Activated CD4-positive, alpha-beta T cell treated with anti-CD3 and anti-CD28 coated beads, Interleukin-2, amount 10 ng/mL, durations not matched to agents 7 days and 5 days (primary cell): ENCODE measurements at regions of chr17 and their contacts with region 1.

Region 1: DNA sequence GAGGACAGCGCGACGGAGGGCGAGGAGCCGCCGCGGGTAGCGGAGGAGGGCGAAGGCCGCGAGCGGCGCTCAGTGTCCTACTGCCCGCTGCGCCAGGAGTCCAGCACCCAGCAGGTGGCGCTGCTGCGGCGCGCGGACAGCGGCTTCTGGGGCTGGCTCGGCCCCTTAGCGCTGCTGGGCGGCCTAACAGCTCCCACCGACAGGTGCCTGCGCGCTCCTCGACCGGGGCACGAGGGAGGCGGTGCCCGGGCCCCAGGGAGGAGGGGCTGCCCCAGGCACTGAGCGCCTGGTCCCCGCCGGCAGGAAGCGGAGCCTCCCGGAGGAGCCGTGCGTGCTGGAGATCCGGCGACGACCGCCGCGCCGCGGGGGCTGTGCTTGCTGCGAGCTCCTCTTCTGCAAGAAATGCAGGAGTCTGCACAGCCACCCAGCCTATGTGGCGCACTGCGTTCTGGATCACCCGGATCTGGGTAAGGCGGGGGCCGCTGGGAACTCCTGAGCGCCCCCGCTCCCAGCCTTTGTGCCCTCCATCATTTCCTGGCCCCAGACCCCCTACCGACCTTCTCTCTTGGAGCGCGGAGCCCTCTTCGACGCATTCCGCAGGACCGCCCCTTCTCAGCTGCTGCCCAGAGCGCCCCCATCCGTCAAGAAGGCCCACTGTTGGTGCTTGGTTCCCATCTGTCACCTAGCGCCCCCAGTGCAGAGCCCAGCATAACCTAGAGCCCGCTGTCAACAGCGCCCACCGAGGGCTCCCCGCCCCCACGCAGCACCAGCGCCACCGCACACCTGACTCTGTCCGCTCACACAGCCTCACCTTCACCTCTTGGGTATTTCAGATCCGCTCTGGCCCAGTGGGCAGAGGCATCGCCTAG is 3.7 kb downstream of the C17orf50 start:
- DNase-seq: peak; percentile 82
- H3K4me3 Mint-ChIP-seq: peak overlapping the region; percentile 78
- H3K27ac Mint-ChIP-seq: peak overlapping the region; percentile 74
- H3K4me1 Mint-ChIP-seq: peaks cover 11% of the 10 kb centered on the region
- H3K27me3 Mint-ChIP-seq: no peaks in the 10 kb centered on the region

Region 2: DNA sequence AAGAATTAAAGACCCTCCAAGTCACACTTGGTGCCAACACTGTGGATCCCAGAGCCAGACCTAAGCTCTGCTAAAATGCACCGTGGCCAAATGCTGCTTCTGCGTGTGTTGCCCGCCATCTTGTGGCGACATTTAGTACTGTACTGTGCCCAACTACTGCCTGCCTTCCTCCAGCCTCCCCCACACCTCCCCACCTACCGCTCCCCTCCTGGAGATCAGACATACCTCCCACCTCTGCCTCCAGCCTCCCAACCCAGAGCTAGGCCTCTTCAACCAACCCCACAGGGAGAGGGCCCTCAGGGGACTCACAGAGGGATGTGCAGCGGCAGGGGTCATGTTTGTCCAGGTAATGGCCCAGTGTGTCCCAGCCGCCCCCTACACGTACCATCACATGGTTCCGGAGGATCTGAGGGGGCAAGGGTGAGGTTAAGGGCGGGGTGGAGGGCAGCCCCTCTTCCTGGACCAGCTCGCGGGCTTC is 16.8 kb before region 1 on chr17:
- CTCF ChIA-PET with region 1: interaction called, 13 read pairs
- POLR2A ChIA-PET with region 1: no interaction called
- DNase-seq: peak; percentile 84
- H3K4me3 Mint-ChIP-seq: no peak overlapping the region
- H3K27ac Mint-ChIP-seq: no peak overlapping the region
- H3K4me1 Mint-ChIP-seq: peaks cover 14% of the 10 kb centered on the region
- H3K27me3 Mint-ChIP-seq: peaks cover 36% of the 10 kb centered on the region

Region 3: GRCh38 chr17:35774499-35774898 is 10.1 kb after region 1 on chr17:
- CTCF ChIA-PET with region 1: interaction called, 16 read pairs
- POLR2A ChIA-PET with region 1: no interaction called
- DNase-seq: no peak
- H3K4me3 Mint-ChIP-seq: no peak overlapping the region
- H3K27ac Mint-ChIP-seq: no peak overlapping the region
- H3K4me1 Mint-ChIP-seq: no peaks in the 10 kb centered on the region
- H3K27me3 Mint-ChIP-seq: peaks cover 15% of the 10 kb centered on the region

Region 4: DNA sequence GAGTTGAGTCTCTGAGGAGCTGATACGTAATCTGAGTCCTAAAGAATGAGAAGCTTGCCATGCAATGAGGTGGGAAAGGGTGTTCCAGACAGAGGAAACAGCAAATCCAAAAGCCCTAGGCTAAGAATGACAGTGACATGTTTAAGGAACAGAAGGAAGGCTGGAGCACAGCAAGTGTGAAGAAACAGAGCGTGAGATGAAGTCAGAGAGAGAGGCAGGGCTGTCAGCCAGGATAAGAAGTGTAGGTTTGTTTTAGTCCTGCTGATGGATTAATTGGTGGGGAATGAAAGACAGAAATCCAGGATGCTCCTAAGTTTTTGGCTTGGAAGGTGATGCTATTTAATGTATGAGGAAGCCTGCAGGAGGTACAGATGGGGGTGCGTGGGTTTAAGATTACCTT is 16.6 kb after region 1 on chr17:
- CTCF ChIA-PET with region 1: interaction called, 19 read pairs
- POLR2A ChIA-PET with region 1: no interaction called
- DNase-seq: no peak
- H3K4me3 Mint-ChIP-seq: no peak overlapping the region
- H3K27ac Mint-ChIP-seq: no peak overlapping the region
- H3K4me1 Mint-ChIP-seq: no peaks in the 10 kb centered on the region
- H3K27me3 Mint-ChIP-seq: peaks cover 20% of the 10 kb centered on the region

Region 5: GRCh38 chr17:35788504-35789368 is 24.4 kb after region 1 on chr17:
- CTCF ChIA-PET with region 1: interaction called, 13 read pairs
- POLR2A ChIA-PET with region 1: no interaction called
- DNase-seq: no peak
- H3K4me3 Mint-ChIP-seq: no peak overlapping the region
- H3K27ac Mint-ChIP-seq: no peak overlapping the region
- H3K4me1 Mint-ChIP-seq: peaks cover 9% of the 10 kb centered on the region
- H3K27me3 Mint-ChIP-seq: peaks cover 33% of the 10 kb centered on the region

Region 6: GRCh38 chr17:35794988-35795824 is 30.8 kb after region 1 on chr17 and contains the start of gene MMP28:
- CTCF ChIA-PET with region 1: interaction called, 20 read pairs
- POLR2A ChIA-PET with region 1: no interaction called
- DNase-seq: peak; percentile 29
- H3K4me3 Mint-ChIP-seq: peak within 1 kb of the TSS; percentile 69
- H3K27ac Mint-ChIP-seq: no peak within 1 kb of the TSS
- H3K4me1 Mint-ChIP-seq: peaks cover 12% of the 10 kb centered on the region
- H3K27me3 Mint-ChIP-seq: peaks cover 57% of the 10 kb centered on the region
- total RNA-seq, gene MMP28: not detected

Region 7: GRCh38 chr17:35808962-35809854 is 44.9 kb after region 1 on chr17 and contains the start of gene TAF15:
- CTCF ChIA-PET with region 1: interaction called, 44 read pairs
- POLR2A ChIA-PET with region 1: interaction called, 21 read pairs
- DNase-seq: peak; percentile 97
- H3K4me3 Mint-ChIP-seq: peak within 1 kb of the TSS; percentile 94
- H3K27ac Mint-ChIP-seq: peak within 1 kb of the TSS; percentile 96
- H3K4me1 Mint-ChIP-seq: peaks cover 58% of the 10 kb centered on the region
- H3K27me3 Mint-ChIP-seq: no peaks in the 10 kb centered on the region
- total RNA-seq, gene TAF15: 274 to 311 TPM